ENCODE measurements at regions of chr9 and their contacts with region 1.

Region 1: GRCh38 chr9:69019808-69020207 is 5.9 kb upstream of the PRKACG start:
- DNase-seq: peak; percentile 74 to 94 (median 90)
- H3K4me3 ChIP-seq: peak overlapping the region in 1 of 7 experiments; percentile 52
- H3K27ac ChIP-seq: peak overlapping the region in 1 of 2 experiments; percentile 70
- H3K4me1 ChIP-seq: peaks cover 8 to 53% (median 42%) of the 10 kb centered on the region in 4 experiments
- H3K27me3 ChIP-seq: peaks cover 0 to 5% (median 0%) of the 10 kb centered on the region in 5 experiments

Region 2: DNA sequence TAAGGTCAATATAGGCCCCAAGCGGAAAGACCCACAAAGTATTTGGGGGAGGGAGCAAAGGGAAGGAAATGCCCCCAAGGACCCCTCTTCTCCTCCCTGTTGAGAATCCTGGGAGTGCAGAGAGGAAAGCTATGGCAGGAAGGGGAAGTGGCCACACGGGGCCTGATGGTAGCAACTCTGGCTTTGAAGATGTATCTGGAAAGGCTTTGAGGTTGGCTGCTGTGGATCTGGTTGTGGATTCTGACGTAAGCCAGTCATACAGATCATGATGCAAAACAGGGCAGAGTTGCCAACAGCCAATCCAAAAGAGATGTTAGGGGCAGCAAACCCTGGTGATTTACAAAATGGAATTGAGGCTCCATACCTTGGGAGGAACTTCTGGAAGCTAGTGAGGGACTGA is 114.7 kb before region 1 on chr9:
- CTCF ChIA-PET with region 1: no interaction called
- POLR2A ChIA-PET with region 1: no interaction called
- DNase-seq: peak; percentile 29 to 46 (median 44)
- H3K4me3 ChIP-seq: no peak overlapping the region
- H3K27ac ChIP-seq: no peak overlapping the region
- H3K4me1 ChIP-seq: peaks cover 0 to 13% (median 7%) of the 10 kb centered on the region in 4 experiments
- H3K27me3 ChIP-seq: no peaks in the 10 kb centered on the region

Region 3: GRCh38 chr9:68919661-68920060 is 100.1 kb before region 1 on chr9:
- CTCF ChIA-PET with region 1: no interaction called
- POLR2A ChIA-PET with region 1: no interaction called
- DNase-seq: peak in 1 of 3 donors; percentile 25
- H3K4me3 ChIP-seq: peak overlapping the region in 3 of 7 experiments; percentile 11 to 36 (median 28)
- H3K27ac ChIP-seq: peak overlapping the region in 1 of 2 experiments; percentile 52
- H3K4me1 ChIP-seq: peaks cover 6 to 14% (median 6%) of the 10 kb centered on the region in 4 experiments
- H3K27me3 ChIP-seq: no peaks in the 10 kb centered on the region

Region 4: DNA sequence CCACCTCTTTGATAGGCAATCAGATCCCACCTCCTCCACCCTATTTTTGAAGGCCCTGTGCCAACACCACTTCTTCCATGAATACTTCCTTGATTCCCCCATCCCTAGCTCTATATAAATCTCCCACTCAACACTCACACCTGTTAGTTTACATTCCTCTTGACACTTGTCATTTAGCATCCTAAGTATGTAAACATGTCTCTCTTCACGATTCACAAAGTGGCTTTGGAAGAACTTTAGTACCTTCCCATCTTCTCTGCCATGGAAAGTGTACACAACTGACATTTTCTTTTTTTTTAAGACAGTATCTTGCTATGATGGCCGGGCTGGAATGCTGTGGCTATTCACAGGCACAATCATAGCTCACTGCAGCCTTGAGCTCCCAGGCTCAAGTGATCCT is 14.3 kb after region 1 on chr9:
- CTCF ChIA-PET with region 1: interaction called, 14 read pairs
- POLR2A ChIA-PET with region 1: no interaction called
- DNase-seq: no peak
- H3K4me3 ChIP-seq: no peak overlapping the region
- H3K27ac ChIP-seq: no peak overlapping the region
- H3K4me1 ChIP-seq: peaks cover 0 to 23% (median 13%) of the 10 kb centered on the region in 4 experiments
- H3K27me3 ChIP-seq: no peaks in the 10 kb centered on the region

Region 5: GRCh38 chr9:69085569-69086283 is 65.9 kb after region 1 on chr9:
- CTCF ChIA-PET with region 1: no interaction called
- POLR2A ChIA-PET with region 1: no interaction called
- DNase-seq: no peak
- H3K4me3 ChIP-seq: no peak overlapping the region
- H3K27ac ChIP-seq: no peak overlapping the region
- H3K4me1 ChIP-seq: no peaks in the 10 kb centered on the region
- H3K27me3 ChIP-seq: no peaks in the 10 kb centered on the region

Measured in common myeloid progenitor, CD34-positive (primary cell).